ENCODE measurements at regions of chr4 and their contacts with region 1.

Region 1: DNA sequence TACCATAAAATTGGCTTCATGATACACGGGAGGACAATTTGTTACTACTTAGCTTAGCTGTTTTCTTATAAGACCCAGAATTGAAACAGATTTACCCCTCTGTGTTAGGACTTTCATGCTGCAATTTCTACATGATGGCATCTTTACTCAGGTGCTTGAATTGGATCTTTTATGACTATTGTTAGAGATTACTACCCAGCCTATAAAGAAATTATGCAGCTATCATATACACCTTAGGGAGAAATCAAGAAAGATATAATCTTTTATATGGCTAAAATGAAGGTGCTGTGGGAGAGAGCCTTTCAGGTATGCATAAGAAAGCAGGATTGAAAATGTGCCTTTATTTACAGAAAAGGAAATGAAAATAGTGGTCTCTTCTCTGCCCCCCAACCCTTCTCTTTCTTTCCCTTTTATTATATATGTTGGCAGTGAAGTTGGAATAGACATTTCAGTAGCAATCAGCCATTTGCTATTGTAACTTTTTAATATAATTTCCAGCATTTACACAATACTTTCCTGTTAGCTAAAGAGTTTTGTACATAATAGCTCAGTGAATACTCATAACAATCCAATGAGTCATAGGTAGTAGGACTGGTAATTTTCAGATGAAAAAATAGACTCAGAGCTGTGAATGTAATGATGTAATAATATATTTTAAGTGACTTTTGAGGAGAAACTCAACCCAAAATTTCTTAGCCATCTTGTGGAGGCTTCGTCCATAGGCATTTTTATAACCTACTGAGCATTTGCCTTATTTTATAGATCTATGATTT is 311.8 kb downstream of the ADGRL3 start:
- DNase-seq: peak in 1 of 2 experiments; percentile 65
- H3K4me3 ChIP-seq: no peak overlapping the region
- H3K27ac ChIP-seq: no peak overlapping the region
- H3K4me1 ChIP-seq: peaks cover 8% of the 10 kb centered on the region
- H3K27me3 ChIP-seq: no peaks in the 10 kb centered on the region
- CTCF ChIP-seq: no peak

Region 2: GRCh38 chr4:61374447-61374891 is 137.4 kb before region 1 on chr4:
- CTCF ChIA-PET with region 1: no interaction called
- POLR2A ChIA-PET with region 1: interaction called, 10 read pairs
- intact Hi-C with region 1: no loop called
- DNase-seq: no peak
- H3K4me3 ChIP-seq: no peak overlapping the region
- H3K27ac ChIP-seq: no peak overlapping the region
- H3K4me1 ChIP-seq: no peaks in the 10 kb centered on the region
- H3K27me3 ChIP-seq: no peaks in the 10 kb centered on the region
- CTCF ChIP-seq: no peak

Region 3: GRCh38 chr4:61468091-61468720 is 43.7 kb before region 1 on chr4:
- CTCF ChIA-PET with region 1: no interaction called
- POLR2A ChIA-PET with region 1: no interaction called
- intact Hi-C with region 1: loop called (anchors 5 kb)
- DNase-seq: peak; percentile 36 to 84
- H3K4me3 ChIP-seq: no peak overlapping the region
- H3K27ac ChIP-seq: peak overlapping the region; percentile 53; the same call in 1 of the 2 replicates
- H3K4me1 ChIP-seq: peaks cover 9% of the 10 kb centered on the region; the same call in 1 of the 2 replicates
- H3K27me3 ChIP-seq: no peaks in the 10 kb centered on the region
- CTCF ChIP-seq: no peak

Region 4: GRCh38 chr4:62037571-62037970 is 525.7 kb after region 1 on chr4:
- CTCF ChIA-PET with region 1: no interaction called
- POLR2A ChIA-PET with region 1: no interaction called
- intact Hi-C with region 1: no loop called
- DNase-seq: no peak
- H3K4me3 ChIP-seq: no peak overlapping the region
- H3K27ac ChIP-seq: no peak overlapping the region
- H3K4me1 ChIP-seq: no peaks in the 10 kb centered on the region
- H3K27me3 ChIP-seq: no peaks in the 10 kb centered on the region
- CTCF ChIP-seq: no peak

Measured in PC-9 (cell line).